GM12878 (cell line): ENCODE measurements at regions of chr3 and their contacts with region 1.

Region 1: DNA sequence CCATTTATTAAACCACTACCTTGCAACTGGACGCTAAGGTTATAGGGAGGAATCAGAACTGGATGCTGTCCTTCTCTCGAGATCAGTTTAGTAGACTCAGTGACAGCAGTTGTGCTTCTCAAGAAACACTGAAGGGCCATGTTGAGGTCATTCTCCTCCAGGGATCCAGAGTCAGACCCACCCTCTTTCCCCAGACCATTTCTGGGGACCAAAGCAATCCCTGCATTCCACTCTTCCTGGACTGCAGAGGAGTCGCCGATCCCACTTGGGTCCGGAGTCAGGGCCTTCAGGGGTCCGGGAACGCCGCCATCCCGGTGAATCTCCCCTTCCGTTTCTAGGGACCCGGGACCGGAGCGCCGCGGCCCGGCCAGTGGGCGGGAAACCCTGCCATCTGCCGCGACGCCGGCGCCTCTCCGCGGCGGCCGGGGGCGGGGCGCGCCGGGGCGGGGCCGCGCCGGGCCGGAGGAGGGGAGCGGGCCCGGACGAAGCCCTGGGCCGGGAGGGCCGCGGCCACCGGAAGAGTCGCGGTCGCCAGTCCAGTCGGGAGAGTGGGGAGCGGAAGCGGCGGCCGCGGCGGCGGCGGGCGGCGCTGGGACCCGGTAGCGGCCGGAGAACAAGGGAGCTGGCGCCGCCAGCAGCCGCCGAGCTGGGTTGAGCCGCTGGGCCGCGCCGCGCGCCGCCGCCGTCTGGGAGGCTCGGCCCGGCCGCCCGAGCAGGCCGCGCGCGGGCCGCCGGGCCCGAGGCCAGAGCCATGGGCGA is at the start of gene DVL3:
- DNase-seq: no peak
- ATAC-seq: peak; percentile 81
- H3K4me3 ChIP-seq: peak within 1 kb of the TSS; percentile 82
- H3K27ac ChIP-seq: peak within 1 kb of the TSS; percentile 35
- H3K4me1 ChIP-seq: peaks cover 4% of the 10 kb centered on the region; the same call in 1 of the 2 replicates
- H3K27me3 ChIP-seq: no peaks in the 10 kb centered on the region
- CTCF ChIP-seq: 0 out of 6 replicates have a peak, but pooled peaks of 1 of the 3 experiments have one; percentile 4
- EP300 ChIP-seq: no peak
- POLR2A ChIP-seq: peak; percentile 55; the same call in 1 of the 2 replicates
- RAD21 ChIP-seq: no peak
- polyA plus RNA-seq, gene DVL3: 2.2 to 2.4 TPM

Region 2: GRCh38 chr3:184135149-184135910 is 19.7 kb before region 1 on chr3 and contains the start of gene EIF2B5:
- CTCF ChIA-PET with region 1: interaction called, 7 read pairs
- POLR2A ChIA-PET with region 1: interaction called, 4 read pairs
- RAD21 ChIA-PET with region 1: interaction called, 10 read pairs
- SMC1A ChIA-PET with region 1: interaction called, 4 read pairs
- in situ Hi-C with region 1: no loop called
- intact Hi-C with region 1: loop called (anchors 1 kb)
- DNase-seq: peak; percentile 84
- ATAC-seq: peak; percentile 92
- H3K4me3 ChIP-seq: peak within 1 kb of the TSS; percentile 95
- H3K27ac ChIP-seq: peak within 1 kb of the TSS; percentile 84
- H3K4me1 ChIP-seq: peaks cover 4% of the 10 kb centered on the region; the same call in 1 of the 2 replicates
- H3K27me3 ChIP-seq: no peaks in the 10 kb centered on the region
- CTCF ChIP-seq: peak; percentile 25 to 36 (median 35); a peak in 4 of 6 replicates
- EP300 ChIP-seq: no peak
- POLR2A ChIP-seq: peak; percentile 96
- RAD21 ChIP-seq: no peak
- polyA plus RNA-seq, gene EIF2B5: 13.7 to 23.6 TPM